HEK293 (cell line): ENCODE measurements at regions of chr17 and their contacts with region 1.

Region 1: DNA sequence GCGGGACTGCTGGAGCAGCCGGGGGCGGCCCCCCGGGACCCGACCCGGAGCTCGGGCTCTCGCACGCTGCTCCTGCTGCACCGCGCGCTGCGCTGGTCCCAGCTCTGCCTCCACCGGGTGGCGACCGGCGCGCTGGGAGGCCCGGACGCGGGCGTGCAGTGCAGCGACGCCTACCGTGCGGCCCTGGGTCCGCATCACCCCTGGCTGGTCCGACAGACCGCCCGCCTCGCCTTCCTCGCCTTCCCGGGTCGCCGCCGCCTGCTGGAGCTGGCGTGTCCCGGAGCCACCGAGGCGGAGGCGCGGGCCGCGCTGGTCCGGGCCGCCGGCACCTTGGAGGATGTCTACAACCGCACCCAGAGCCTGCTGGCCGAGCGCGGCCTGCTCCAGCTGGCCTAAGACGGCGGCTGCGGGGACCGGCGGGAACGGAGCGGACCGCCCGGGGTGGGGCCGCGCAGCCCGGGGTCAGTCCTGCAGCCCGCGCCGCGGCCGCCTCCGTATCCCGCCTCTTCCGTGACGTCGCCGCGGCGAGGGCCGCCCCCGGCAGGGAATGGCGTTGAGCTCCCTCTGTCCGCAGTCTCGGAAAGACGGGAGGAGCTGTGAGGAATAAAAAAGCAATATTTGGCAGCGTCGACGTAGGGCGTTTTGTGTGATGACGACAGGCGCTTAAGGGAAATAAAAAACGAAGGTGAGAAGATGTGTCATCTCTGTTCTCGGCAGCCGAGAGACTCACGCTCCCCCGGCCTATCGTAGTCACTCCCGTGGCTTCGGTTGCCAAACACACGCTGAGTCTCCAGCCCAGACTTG is 1.3 kb downstream of the GLTPD2 start:
- H3K4me3 ChIP-seq: peak overlapping the region; percentile 62
- H3K27ac ChIP-seq: peak overlapping the region; percentile 96
- H3K4me1 ChIP-seq: peaks cover 4% of the 10 kb centered on the region
- CTCF ChIP-seq: peak; percentile 92

Region 2: GRCh38 chr17:4721203-4722135 is 68.6 kb before region 1 on chr17:
- CTCF ChIA-PET with region 1: interaction called, 16 read pairs
- POLR2A ChIA-PET with region 1: interaction called, 6 read pairs
- H3K4me3 ChIP-seq: no peak overlapping the region
- H3K27ac ChIP-seq: peak overlapping the region; percentile 63
- H3K4me1 ChIP-seq: peaks cover 31% of the 10 kb centered on the region
- CTCF ChIP-seq: no peak

Region 3: DNA sequence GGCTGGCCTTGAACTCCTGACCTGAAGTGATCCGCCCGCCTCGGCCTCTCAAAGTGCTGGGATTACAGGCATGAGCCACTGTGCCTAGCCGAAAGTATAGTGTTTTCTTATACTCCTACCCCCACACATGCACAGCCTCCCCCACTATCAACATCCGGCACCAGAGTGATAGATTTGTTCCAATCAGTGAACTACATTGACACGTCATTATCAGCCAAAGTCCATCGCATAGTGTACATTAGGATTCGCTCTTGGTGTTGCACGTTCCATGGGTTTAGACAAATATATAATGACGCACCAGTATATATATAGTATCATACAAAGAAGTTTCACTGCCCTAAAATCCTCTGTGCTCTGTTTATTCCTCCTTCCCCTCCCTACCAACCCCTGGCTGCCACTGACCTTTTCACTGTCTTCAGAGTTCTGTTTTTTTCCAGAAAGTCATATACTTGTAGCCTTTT is 30.3 kb before region 1 on chr17:
- CTCF ChIA-PET with region 1: interaction called, 15 read pairs
- POLR2A ChIA-PET with region 1: interaction called, 5 read pairs
- H3K4me3 ChIP-seq: no peak overlapping the region
- H3K27ac ChIP-seq: no peak overlapping the region
- H3K4me1 ChIP-seq: no peaks in the 10 kb centered on the region
- CTCF ChIP-seq: no peak

Region 4: DNA sequence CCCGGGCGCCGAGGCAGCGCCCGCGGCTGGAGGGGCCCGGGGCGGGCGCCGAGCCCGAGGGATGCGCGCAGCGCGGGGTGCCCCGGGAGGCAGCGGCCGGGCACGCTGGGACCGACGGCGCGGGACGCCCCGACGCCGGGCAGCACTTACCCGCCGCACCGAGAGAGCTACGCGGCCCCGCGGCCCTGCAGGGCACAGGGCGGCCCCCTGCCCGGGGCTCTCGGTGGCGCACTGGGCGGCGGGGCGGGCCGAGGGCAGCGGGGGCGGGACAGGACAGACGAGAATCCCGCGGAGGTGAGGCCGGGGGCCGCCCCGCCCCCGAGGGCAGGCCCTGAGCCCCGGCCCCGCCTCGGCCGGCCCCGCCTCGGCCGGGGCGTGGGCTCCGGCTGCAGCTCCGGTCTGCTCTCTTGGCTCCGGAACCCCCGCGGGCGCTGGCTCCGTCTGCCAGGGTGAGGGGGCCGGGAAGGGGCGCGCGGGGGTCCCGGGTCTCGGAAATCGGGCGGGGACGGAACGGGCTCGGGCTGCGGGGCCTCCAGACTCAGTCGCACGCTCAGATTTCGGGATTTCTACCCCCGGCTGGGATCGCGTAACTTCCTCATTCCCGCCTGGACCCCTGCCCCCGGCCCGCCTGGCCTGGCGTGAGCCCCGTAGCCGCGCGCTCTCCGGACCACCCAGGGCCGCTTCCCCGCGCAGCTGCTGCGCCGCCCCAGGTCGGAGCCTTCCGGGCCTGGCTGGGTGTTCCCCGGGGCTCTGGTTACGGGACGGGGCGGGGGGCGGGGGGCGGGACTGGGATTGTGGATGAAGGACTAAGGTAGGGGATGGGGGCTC is 16.9 kb after region 1 on chr17 and contains the start of gene PLD2:
- CTCF ChIA-PET with region 1: interaction called, 8 read pairs
- POLR2A ChIA-PET with region 1: interaction called, 31 read pairs
- H3K4me3 ChIP-seq: peak within 1 kb of the TSS; percentile 69
- H3K27ac ChIP-seq: peak within 1 kb of the TSS; percentile 64; the same call in 1 of the 2 replicates
- H3K4me1 ChIP-seq: no peaks in the 10 kb centered on the region
- CTCF ChIP-seq: no peak

Region 5: DNA sequence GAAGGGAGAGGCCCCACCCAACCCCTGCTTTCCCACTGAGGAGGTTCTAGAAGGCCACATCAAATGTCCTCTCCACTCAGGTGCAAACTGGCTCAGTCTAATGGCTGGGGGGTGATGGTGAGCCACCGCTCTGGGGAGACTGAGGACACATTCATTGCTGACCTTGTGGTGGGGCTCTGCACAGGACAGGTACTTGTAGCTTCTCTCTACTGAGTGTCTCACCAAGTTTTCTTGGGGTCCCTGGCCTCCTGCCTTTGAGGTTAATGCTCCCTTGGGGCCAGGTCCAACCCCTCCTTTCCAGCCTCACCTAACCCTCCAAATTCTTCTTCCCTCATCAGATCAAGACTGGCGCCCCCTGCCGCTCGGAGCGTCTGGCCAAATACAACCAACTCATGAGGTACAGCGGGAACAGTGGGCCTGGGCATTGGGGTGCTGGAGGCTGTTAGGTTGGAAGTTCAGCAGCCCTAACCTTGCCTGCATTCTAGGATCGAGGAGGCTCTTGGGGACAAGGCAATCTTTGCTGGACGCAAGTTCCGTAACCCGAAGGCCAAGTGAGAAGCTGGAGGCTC is 166.5 kb after region 1 on chr17:
- CTCF ChIA-PET with region 1: no interaction called
- POLR2A ChIA-PET with region 1: no interaction called
- H3K4me3 ChIP-seq: no peak overlapping the region
- H3K27ac ChIP-seq: no peak overlapping the region
- H3K4me1 ChIP-seq: no peaks in the 10 kb centered on the region
- CTCF ChIP-seq: no peak